Activated CD4-positive, alpha-beta memory T cell treated with anti-CD3 and anti-CD28 coated beads for 36 hours (primary cell): ENCODE measurements at regions of chr4 and their contacts with region 1.

Region 1: DNA sequence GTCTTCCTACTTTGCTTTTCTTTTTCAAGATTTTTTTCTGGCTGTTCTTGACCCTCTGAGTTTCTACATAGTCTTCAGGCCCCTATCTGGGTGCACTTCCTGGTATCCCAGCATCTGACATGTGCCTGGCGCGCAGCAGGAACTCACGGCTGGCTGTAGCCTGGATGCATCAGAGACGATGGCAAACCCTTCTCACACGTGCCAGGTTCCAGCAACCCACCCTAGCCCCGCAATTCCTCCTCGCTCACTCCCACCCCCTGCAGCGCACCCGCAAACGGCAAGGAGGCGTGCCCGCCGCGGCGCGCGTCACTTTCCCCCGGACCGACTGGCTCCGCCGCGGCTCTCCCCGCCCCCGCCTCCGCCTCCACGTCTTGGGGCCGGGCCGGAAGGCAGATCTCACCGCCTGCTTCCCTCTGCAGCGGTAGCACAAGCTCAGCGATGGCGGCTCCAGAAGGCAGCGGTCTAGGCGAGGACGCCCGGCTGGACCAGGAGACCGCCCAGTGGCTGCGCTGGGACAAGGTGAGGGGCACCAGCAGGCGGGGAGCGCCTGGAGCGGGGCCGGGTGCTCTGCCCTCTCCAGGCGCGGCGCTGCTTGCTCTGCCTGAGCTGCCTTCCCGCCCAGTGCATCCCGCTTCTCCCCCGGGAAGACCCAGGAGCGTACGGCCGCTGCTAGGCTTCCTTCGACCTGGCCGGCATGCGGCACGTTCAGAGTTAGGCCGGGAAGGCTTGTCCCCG is at the start of gene PGM2:
- DNase-seq: peak; percentile 93
- H3K4me3 Mint-ChIP-seq: peak within 1 kb of the TSS; percentile 92
- H3K27ac Mint-ChIP-seq: peak within 1 kb of the TSS; percentile 81
- H3K4me1 Mint-ChIP-seq: peaks cover 24% of the 10 kb centered on the region
- H3K27me3 Mint-ChIP-seq: no peaks in the 10 kb centered on the region
- total RNA-seq, gene PGM2: 65.7 to 66.0 TPM

Region 2: DNA sequence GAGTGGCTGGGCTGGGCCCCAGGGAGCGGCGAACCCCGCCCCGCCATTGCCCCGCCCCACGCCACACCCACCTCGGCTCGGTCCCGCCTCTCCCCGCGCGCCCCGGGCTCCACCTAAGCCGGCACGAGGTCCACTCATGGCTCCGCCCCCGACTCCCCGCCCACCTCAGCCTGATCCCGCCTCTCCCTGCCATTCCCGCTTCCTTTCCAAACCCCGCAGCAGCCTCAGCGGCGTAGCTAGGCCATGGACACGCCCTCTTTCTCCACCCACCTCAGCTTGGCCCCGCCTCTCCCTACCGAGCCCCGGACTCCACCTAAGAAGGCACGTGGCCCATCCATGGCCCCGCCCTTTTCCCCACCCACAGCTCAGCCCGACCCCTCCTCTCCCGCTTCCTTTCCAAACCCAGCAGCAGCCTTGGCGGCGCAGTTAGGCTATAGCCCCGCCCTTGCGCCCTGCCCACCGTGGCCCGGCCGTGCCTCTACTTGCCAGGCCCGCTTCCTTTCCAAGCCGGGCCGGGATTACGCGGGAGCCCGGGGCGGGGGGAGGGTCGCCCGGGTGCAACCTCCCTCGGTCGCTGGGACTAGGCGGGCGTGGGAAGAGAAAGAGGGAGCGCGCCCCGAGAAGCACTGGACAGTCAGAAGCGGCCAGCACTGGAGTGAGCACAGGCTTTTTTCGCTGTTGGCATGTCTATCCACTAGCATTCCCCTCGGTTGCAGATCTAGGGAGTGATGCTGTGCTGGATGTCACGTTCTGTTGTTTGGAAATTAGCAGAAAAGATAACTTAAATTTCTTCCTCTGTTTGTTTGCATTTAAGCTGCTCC is 139.9 kb before region 1 on chr4 and contains the start of gene RELL1:
- CTCF ChIA-PET with region 1: no interaction called
- POLR2A ChIA-PET with region 1: interaction called, 6 read pairs
- intact Hi-C with region 1: loop called (anchors 1 kb)
- DNase-seq: peak; percentile 100
- H3K4me3 Mint-ChIP-seq: peak within 1 kb of the TSS; percentile 86
- H3K27ac Mint-ChIP-seq: peak within 1 kb of the TSS; percentile 91
- H3K4me1 Mint-ChIP-seq: peaks cover 34% of the 10 kb centered on the region
- H3K27me3 Mint-ChIP-seq: no peaks in the 10 kb centered on the region
- total RNA-seq, gene RELL1: 15.0 to 16.0 TPM

Region 3: GRCh38 chr4:37873386-37873785 is 46.9 kb after region 1 on chr4:
- CTCF ChIA-PET with region 1: no interaction called
- POLR2A ChIA-PET with region 1: no interaction called
- intact Hi-C with region 1: loop called (anchors 5 kb)
- DNase-seq: no peak
- H3K4me3 Mint-ChIP-seq: no peak overlapping the region
- H3K27ac Mint-ChIP-seq: no peak overlapping the region
- H3K4me1 Mint-ChIP-seq: peaks cover 15% of the 10 kb centered on the region
- H3K27me3 Mint-ChIP-seq: no peaks in the 10 kb centered on the region